ENCODE measurements at regions of chr17 and their contacts with region 1.

Region 1: GRCh38 chr17:67221062-67221998 is 23.7 kb downstream of the HELZ start:
- DNase-seq: no peak
- ATAC-seq: peak; percentile 75
- H3K4me3 Mint-ChIP-seq: no peak overlapping the region
- H3K27ac Mint-ChIP-seq: peak overlapping the region; percentile 75; the same call in 1 of the 2 replicates
- H3K4me1 Mint-ChIP-seq: peaks cover 6% of the 10 kb centered on the region
- H3K27me3 Mint-ChIP-seq: no peaks in the 10 kb centered on the region
- CTCF ChIP-seq: no peak

Region 2: GRCh38 chr17:67139784-67140657 is 81.3 kb before region 1 on chr17:
- CTCF ChIA-PET with region 1: interaction called, 11 read pairs
- POLR2A ChIA-PET with region 1: no interaction called
- DNase-seq: peak; percentile 30
- ATAC-seq: peak; percentile 93
- H3K4me3 Mint-ChIP-seq: no peak overlapping the region
- H3K27ac Mint-ChIP-seq: peak overlapping the region; percentile 42
- H3K4me1 Mint-ChIP-seq: peaks cover 12% of the 10 kb centered on the region
- H3K27me3 Mint-ChIP-seq: no peaks in the 10 kb centered on the region
- CTCF ChIP-seq: no peak

Region 3: DNA sequence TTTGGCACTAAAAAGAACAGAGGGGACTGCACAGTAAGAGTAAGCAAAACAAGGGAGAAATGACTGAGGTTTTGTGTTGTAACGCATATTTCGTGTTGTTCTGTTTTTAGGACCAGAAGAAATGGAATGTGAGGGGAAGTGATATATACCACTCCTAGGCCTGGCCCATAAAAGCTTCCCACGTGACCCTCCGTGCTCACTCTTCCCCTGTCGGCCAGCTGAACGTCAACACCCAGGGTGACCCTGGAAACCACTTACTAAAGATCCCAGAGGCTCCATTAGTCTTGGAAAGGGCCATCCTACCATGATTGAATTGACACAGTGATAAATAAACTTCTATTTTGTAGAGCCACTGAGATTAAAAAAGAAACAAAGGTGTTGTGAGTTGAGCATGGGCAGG is 56.1 kb before region 1 on chr17:
- CTCF ChIA-PET with region 1: no interaction called
- POLR2A ChIA-PET with region 1: no interaction called
- DNase-seq: no peak
- ATAC-seq: no peak
- H3K4me3 Mint-ChIP-seq: no peak overlapping the region
- H3K27ac Mint-ChIP-seq: no peak overlapping the region
- H3K4me1 Mint-ChIP-seq: no peaks in the 10 kb centered on the region
- H3K27me3 Mint-ChIP-seq: no peaks in the 10 kb centered on the region
- CTCF ChIP-seq: no peak

Region 4: DNA sequence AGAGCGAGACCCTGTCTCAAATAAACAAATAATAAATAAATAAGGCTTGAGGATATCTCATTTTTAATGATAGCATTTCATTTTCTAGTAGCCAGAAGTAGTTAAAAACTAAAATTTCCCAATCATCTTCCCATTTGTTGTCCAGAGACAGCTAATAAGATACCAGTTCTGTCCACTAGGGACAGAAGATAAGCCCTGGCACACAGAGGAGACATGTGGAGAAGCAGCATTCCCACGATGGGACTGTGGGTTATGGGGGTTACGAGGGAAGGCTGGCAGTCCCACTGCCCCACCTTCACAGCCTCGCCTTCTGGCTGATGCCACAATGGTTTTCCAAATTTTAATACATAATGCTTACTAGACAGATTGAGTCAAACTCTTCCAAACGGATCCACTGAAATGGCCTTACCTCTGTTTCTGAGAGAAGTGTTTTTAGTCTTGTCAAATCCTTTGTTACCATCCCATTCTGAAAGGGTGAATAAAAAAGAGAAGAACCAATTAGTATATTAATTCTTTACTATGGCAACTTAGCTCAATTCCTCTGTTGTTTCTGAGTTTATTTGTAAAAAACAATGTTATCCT is 20.5 kb before region 1 on chr17:
- CTCF ChIA-PET with region 1: interaction called, 19 read pairs
- POLR2A ChIA-PET with region 1: no interaction called
- DNase-seq: no peak
- ATAC-seq: peak; percentile 79
- H3K4me3 Mint-ChIP-seq: no peak overlapping the region
- H3K27ac Mint-ChIP-seq: no peak overlapping the region
- H3K4me1 Mint-ChIP-seq: no peaks in the 10 kb centered on the region
- H3K27me3 Mint-ChIP-seq: no peaks in the 10 kb centered on the region
- CTCF ChIP-seq: peak; percentile 64

Region 5: DNA sequence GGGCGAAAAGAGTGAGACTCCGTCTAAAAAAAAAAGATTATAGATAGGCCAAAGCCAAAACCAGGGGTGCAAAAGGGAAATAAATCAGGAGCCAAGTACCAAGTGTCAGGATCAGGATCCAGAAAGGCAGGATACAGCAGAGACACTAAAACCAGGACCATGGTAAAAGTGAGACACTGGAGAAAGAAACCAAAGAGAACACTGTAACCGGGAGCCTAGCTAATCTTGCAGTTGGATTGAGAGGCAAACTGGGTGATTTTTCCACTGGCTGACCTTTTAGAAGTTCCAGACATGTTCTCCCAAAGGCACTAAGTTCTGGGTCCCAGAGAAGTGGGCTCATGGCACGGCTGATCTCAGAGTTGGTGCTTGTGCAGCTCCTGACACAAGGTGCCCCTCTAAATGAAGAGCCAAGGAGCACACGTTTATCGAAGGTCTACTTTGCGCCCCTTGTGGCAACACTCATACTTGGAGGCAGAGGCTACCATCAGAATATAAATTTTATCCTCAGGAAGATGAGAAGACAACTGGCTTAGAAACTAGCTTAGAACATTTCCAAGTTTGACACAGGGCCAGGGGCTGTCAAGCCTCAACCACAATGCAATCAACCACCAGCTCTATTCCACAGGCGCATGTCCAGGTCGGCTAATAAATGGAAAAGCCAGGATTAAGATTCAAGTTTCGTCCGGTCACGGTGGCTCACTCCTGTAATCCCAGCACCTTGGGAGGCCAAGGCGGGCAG is 51.2 kb after region 1 on chr17:
- CTCF ChIA-PET with region 1: interaction called, 38 read pairs
- POLR2A ChIA-PET with region 1: no interaction called
- DNase-seq: peak; percentile 50
- ATAC-seq: peak; percentile 95
- H3K4me3 Mint-ChIP-seq: no peak overlapping the region
- H3K27ac Mint-ChIP-seq: peak overlapping the region; percentile 60; the same call in 1 of the 2 replicates
- H3K4me1 Mint-ChIP-seq: no peaks in the 10 kb centered on the region
- H3K27me3 Mint-ChIP-seq: no peaks in the 10 kb centered on the region
- CTCF ChIP-seq: peak; percentile 28; the same call in 1 of the 2 replicates

Region 6: DNA sequence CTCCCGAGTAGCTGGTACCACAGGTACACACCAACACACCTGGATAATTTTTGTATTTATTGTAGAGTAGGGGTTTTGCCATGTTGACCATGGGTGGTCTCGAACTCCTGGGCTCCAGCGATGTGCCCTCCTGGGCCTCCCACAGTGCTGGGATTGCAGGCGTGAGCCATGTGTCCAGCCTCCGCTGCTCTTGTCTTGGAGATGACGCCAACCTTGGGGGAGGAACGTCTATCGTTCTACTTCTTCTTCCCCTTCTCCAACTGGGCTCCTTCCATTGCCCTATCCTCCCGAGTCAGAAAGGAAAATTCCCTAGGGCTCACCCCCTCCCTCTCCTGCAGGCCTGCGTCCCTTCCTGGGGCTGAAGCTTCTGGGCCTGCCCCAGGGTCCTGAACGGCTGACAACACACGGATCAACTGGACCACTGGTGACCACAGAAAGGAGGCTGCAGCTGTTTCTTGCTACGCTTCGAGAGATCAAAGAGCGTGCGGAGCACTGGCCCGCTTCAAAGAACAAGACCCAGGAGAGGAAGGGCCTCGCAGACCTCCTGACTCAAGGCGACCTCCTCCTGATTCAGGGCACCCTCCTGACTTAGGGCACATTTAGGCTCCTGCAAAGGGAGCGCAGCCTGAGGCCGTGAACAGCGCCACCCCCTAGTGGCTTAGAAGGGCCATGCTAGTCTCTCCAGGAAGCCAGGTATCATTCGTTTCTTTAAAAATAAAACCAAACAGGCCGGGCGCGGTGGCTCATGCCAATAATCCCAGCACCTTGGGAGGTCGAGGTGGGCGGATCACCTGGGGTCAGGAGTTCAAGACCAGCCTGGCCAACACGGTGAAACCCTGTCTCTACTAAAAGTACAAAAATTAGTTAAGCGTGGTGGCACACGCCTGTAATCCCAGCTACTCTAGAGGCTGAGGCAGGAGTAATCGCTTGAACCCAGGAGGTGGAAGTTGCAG is 72.2 kb after region 1 on chr17:
- CTCF ChIA-PET with region 1: interaction called, 17 read pairs
- POLR2A ChIA-PET with region 1: no interaction called
- DNase-seq: peak; percentile 76
- ATAC-seq: peak; percentile 92
- H3K4me3 Mint-ChIP-seq: no peak overlapping the region
- H3K27ac Mint-ChIP-seq: no peak overlapping the region
- H3K4me1 Mint-ChIP-seq: peaks cover 13% of the 10 kb centered on the region
- H3K27me3 Mint-ChIP-seq: no peaks in the 10 kb centered on the region; the same call in 1 of the 2 replicates
- CTCF ChIP-seq: peak; percentile 60

Measured in WTC11 (cell line).